Activated naive CD4-positive, alpha-beta T cell treated with anti-CD3 and anti-CD28 coated beads for 36 hours (primary cell): ENCODE measurements at regions of chr17 and their contacts with region 1.

Region 1: GRCh38 chr17:47004906-47005305 is 25.9 kb upstream of the RPRML start:
- DNase-seq: no peak
- H3K4me3 Mint-ChIP-seq: no peak overlapping the region
- H3K27ac Mint-ChIP-seq: no peak overlapping the region
- H3K4me1 Mint-ChIP-seq: peaks cover 4% of the 10 kb centered on the region
- H3K27me3 Mint-ChIP-seq: no peaks in the 10 kb centered on the region

Region 2: GRCh38 chr17:46922804-46923635 is 81.9 kb before region 1 on chr17 and contains the start of gene GOSR2:
- CTCF ChIA-PET with region 1: no interaction called
- intact Hi-C with region 1: loop called (anchors 5 kb)
- DNase-seq: peak; percentile 92
- H3K4me3 Mint-ChIP-seq: peak within 1 kb of the TSS; percentile 96
- H3K27ac Mint-ChIP-seq: peak within 1 kb of the TSS; percentile 99
- H3K4me1 Mint-ChIP-seq: peaks cover 49% of the 10 kb centered on the region
- H3K27me3 Mint-ChIP-seq: no peaks in the 10 kb centered on the region
- total RNA-seq, gene GOSR2: 32.8 to 38.1 TPM

Region 3: DNA sequence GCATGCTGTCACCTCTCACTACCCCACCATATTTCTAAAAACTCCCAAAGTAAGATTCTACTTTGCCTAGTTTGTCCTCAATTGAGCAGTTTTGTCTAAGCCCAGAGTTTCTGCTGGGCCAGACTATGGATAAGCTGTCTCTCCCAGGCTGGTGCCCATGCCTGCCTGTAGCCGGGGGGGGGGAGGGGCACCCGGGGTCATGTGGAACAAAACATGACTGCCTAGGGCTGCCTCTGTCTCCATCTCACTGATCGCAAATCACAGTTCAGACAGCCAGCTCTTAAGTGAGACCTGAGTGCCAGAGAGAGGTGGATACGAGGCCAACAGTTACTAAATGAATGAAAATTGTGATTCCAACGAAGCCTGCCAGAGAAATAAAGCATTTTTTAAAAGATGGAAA is 52.9 kb after region 1 on chr17:
- CTCF ChIA-PET with region 1: no interaction called
- intact Hi-C with region 1: no loop called
- DNase-seq: no peak
- H3K4me3 Mint-ChIP-seq: no peak overlapping the region
- H3K27ac Mint-ChIP-seq: no peak overlapping the region
- H3K4me1 Mint-ChIP-seq: no peaks in the 10 kb centered on the region
- H3K27me3 Mint-ChIP-seq: no peaks in the 10 kb centered on the region

Region 4: GRCh38 chr17:47077576-47077975 is 72.7 kb after region 1 on chr17:
- CTCF ChIA-PET with region 1: no interaction called
- intact Hi-C with region 1: no loop called
- DNase-seq: no peak
- H3K4me3 Mint-ChIP-seq: no peak overlapping the region
- H3K27ac Mint-ChIP-seq: no peak overlapping the region
- H3K4me1 Mint-ChIP-seq: peaks cover 2% of the 10 kb centered on the region
- H3K27me3 Mint-ChIP-seq: no peaks in the 10 kb centered on the region